ENCODE measurements at regions of chr1 and their contacts with region 1.

Region 1: GRCh38 chr1:183404456-183404855 is 13.7 kb downstream of the NMNAT2 start:
- DNase-seq: no peak
- H3K4me3 Mint-ChIP-seq: no peak overlapping the region
- H3K27ac Mint-ChIP-seq: no peak overlapping the region
- H3K4me1 Mint-ChIP-seq: no peaks in the 10 kb centered on the region
- H3K27me3 Mint-ChIP-seq: peaks cover 24% of the 10 kb centered on the region

Region 2: GRCh38 chr1:183416850-183417771 is 12.7 kb after region 1 on chr1:
- CTCF ChIA-PET with region 1: no interaction called
- intact Hi-C with region 1: loop called (anchors 1 kb)
- DNase-seq: peak; percentile 66
- H3K4me3 Mint-ChIP-seq: peak overlapping the region; percentile 2
- H3K27ac Mint-ChIP-seq: no peak overlapping the region
- H3K4me1 Mint-ChIP-seq: peaks cover 23% of the 10 kb centered on the region
- H3K27me3 Mint-ChIP-seq: peaks cover 49% of the 10 kb centered on the region

Measured in activated naive CD4-positive, alpha-beta T cell treated with anti-CD3 and anti-CD28 coated beads for 36 hours (primary cell).